ENCODE measurements at regions of chr6 and their contacts with region 1.

Region 1: DNA sequence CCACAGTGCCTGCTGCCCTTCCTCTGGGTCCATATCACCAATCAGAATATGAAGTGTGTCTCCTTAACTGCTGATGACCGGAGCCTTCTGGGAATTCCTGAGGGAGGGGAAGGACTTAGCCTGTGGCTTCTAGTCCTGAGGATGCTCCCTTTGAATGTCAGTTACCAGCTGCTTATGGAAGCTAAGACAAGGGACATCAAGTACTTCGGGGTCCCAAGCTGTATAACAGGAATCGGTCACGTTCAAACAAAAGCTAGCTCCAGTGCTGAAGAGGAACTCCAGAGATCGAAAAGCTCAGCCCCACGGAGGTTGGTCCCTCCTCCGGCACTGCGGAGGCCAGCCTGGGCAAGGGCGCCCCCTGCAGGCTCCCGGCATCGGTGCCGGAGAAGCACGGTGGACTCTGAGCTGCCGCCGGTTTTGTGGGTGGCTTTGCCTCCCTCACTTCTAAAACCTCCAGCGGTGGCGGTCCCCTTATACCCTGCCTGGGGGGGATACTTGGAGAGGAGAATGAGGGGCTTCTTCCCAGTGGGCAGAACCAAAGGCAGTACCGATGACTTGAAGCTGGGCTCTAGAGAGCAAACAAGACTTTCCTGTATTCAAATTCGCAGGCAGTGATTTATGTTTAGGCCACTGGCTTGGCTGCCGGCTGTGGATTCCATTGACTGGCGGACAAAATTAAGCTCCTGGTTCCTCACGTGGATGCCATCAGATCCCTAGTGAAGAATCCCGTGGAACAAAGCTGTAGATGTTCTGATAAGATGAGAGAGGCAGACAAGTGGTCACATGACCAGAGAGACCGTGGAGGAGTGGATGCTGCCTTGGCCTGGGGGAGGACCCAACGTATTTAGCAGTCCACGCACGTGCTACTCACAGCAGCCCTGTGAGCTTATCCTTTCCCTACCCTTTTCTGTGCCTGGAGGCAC is 16.2 kb upstream of the UBR2 start:
- H3K4me3 ChIP-seq: peak overlapping the region; percentile 68
- H3K27ac ChIP-seq: no peak overlapping the region; the same call in 1 of the 2 replicates
- H3K4me1 ChIP-seq: no peaks in the 10 kb centered on the region
- CTCF ChIP-seq: peak; percentile 96

Region 2: GRCh38 chr6:42217519-42218367 is 329.9 kb before region 1 on chr6 and contains the start of gene MRPS10:
- CTCF ChIA-PET with region 1: interaction called, 58 read pairs
- POLR2A ChIA-PET with region 1: interaction called, 4 read pairs
- H3K4me3 ChIP-seq: peak within 1 kb of the TSS; percentile 60
- H3K27ac ChIP-seq: peak within 1 kb of the TSS; percentile 79
- H3K4me1 ChIP-seq: peaks cover 3% of the 10 kb centered on the region; the same call in 1 of the 2 replicates
- CTCF ChIP-seq: no peak

Region 3: GRCh38 chr6:42260972-42261371 is 286.7 kb before region 1 on chr6:
- CTCF ChIA-PET with region 1: interaction called, 47 read pairs
- POLR2A ChIA-PET with region 1: interaction called, 3 read pairs
- H3K4me3 ChIP-seq: no peak overlapping the region
- H3K27ac ChIP-seq: no peak overlapping the region
- H3K4me1 ChIP-seq: no peaks in the 10 kb centered on the region
- CTCF ChIP-seq: 0 out of 2 replicates have a peak, but pooled peaks have one; percentile 11

Region 4: DNA sequence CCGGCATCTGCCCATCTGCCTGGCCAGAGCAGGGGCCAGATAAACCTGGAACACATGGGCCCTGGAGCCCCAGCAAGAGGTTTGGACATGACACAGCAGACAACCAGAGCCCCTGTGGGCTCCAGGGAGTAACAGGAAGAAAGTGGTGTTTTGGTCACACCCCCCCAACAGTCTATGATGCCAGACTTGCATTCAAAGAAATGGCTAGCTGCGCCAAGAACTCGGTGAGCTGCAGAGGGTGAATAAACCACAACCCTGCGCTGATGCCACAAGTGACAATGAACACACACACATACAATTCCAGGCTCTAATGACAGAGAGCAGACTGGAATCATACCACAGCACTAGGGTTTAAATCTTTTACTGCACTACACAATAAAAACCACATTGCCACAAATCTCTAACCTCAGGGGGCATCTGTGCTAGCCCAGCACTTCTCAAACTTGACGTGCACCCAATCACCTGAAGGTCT is 130.0 kb before region 1 on chr6:
- CTCF ChIA-PET with region 1: interaction called, 13 read pairs
- POLR2A ChIA-PET with region 1: no interaction called
- H3K4me3 ChIP-seq: no peak overlapping the region
- H3K27ac ChIP-seq: no peak overlapping the region
- H3K4me1 ChIP-seq: no peaks in the 10 kb centered on the region
- CTCF ChIP-seq: no peak

Region 5: DNA sequence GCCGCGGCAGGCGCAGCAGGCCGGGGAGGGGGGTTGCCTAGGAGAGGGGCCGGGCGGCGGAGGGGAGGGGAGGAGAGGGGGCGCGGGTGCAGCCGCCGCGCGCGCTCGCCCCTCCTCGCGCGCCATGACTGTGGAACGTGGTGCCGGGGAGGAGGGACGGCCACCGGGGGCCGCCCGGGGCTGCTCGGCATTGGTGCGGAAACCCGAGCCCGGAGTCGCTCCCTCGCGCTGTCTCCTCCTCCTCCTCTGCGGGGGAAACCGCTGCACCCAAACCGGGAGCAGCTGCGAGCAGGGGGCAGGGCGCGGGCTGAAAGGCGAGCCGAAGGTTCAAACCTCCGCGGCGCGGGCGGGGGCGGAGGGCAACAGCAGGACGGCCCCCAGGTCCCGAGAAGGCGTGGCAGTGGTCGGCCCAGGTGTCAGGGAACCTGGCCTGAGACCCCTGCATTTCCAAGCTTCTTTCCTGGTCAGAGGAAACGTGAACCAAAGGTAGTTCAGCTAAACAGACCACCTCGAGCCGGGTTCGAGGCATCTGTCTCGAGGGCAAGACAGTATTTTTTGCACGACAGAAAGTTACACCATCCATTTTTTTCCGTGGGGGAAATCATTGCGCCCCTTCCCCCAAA is 94.5 kb before region 1 on chr6:
- CTCF ChIA-PET with region 1: interaction called, 17 read pairs
- POLR2A ChIA-PET with region 1: interaction called, 19 read pairs
- H3K4me3 ChIP-seq: peak overlapping the region; percentile 60
- H3K27ac ChIP-seq: peak overlapping the region; percentile 99
- H3K4me1 ChIP-seq: peaks cover 26% of the 10 kb centered on the region
- CTCF ChIP-seq: no peak

Region 6: DNA sequence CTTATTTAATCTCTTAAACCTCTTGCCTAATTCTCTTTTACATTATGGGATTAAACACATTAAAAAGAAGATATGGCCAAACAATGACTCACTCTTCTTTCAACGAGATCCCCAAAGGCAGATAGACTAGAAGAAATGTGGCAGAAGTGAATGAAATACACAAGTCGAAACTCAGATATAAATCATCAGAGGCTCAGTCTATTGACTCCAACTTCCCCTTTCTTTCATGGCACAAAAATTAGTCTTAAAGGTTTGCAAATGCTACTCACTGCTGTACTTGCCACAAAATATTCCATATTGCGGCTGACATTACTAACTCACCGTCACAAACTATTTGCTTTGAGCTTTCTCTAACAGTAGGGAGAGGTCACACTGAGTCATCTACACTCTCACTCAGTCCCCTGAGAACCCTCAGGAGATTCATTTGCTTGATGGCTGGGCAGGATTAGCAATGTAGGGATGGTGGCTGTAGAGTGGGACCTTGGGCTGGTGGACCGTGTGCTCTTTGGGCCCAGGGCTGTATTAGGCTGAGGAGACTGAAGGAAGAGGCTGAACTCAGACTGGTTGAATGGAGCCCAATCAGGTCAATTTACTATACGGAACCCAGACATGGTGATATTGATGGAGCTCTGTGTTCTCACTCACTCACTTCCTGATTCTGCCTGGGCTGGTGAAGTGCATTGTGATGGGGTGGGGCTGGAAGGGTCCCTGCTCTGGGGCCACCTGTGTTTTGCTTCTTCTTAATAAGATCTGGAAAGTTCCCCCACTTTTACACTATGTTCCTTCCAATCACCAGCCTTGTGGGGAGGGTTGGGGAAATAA is 26.7 kb before region 1 on chr6:
- CTCF ChIA-PET with region 1: interaction called, 24 read pairs
- POLR2A ChIA-PET with region 1: no interaction called
- H3K4me3 ChIP-seq: no peak overlapping the region
- H3K27ac ChIP-seq: no peak overlapping the region
- H3K4me1 ChIP-seq: no peaks in the 10 kb centered on the region
- CTCF ChIP-seq: no peak

Region 7: DNA sequence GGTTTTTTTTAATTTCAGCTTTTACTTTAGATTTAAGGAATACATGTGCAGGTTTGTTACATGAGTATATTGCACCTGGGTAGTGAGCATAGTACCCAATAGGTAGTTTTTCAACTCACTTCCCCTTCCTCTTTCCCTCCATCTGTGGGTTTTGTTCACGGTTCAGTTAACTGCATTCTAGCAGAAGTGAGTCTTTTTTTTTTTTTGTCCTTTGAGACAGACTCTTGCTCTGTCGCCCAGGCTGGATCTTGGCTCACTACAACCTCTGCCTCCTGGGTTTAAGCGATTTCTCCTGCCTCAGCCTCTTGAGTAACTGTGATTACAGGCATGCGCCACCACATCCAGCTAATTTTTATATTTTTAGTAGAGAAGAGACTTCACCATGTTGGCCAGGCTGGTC is 24.9 kb after region 1 on chr6:
- CTCF ChIA-PET with region 1: interaction called, 20 read pairs
- POLR2A ChIA-PET with region 1: no interaction called
- H3K4me3 ChIP-seq: no peak overlapping the region
- H3K27ac ChIP-seq: no peak overlapping the region
- H3K4me1 ChIP-seq: peaks cover 6% of the 10 kb centered on the region; the same call in 1 of the 2 replicates
- CTCF ChIP-seq: no peak

Measured in HEK293 (cell line).